ENCODE measurements at regions of chr1 and their contacts with region 1.

Region 1: GRCh38 chr1:48109390-48110013 is 112.3 kb upstream of the TRABD2B start:
- DNase-seq: peak in 2 of 4 experiments; percentile 34 to 61
- ATAC-seq: peak; percentile 84
- H3K4me3 ChIP-seq: no peak overlapping the region
- H3K27ac ChIP-seq: no peak overlapping the region
- H3K4me1 ChIP-seq: no peaks in the 10 kb centered on the region
- H3K27me3 ChIP-seq: no peaks in the 10 kb centered on the region
- CTCF ChIP-seq: peak; percentile 63 to 88 (median 78); a peak in 5 of 6 replicates
- EP300 ChIP-seq: no peak
- POLR2A ChIP-seq: no peak
- RAD21 ChIP-seq: peak; percentile 88 to 93

Region 2: GRCh38 chr1:47738560-47739182 is 370.8 kb before region 1 on chr1:
- CTCF ChIA-PET with region 1: no interaction called
- POLR2A ChIA-PET with region 1: no interaction called
- in situ Hi-C with region 1: no loop called
- intact Hi-C with region 1: loop called (anchors 2 kb)
- DNase-seq: peak; percentile 59 to 80 (median 74)
- ATAC-seq: peak; percentile 97
- H3K4me3 ChIP-seq: no peak overlapping the region
- H3K27ac ChIP-seq: no peak overlapping the region
- H3K4me1 ChIP-seq: no peaks in the 10 kb centered on the region
- H3K27me3 ChIP-seq: no peaks in the 10 kb centered on the region
- CTCF ChIP-seq: peak; percentile 77 to 81 (median 79)
- EP300 ChIP-seq: no peak
- POLR2A ChIP-seq: no peak
- RAD21 ChIP-seq: peak; percentile 34 to 69

Region 3: GRCh38 chr1:48048064-48048463 is 61.4 kb before region 1 on chr1:
- CTCF ChIA-PET with region 1: no interaction called
- POLR2A ChIA-PET with region 1: no interaction called
- in situ Hi-C with region 1: no loop called
- intact Hi-C with region 1: no loop called
- DNase-seq: no peak
- ATAC-seq: no peak
- H3K4me3 ChIP-seq: no peak overlapping the region
- H3K27ac ChIP-seq: no peak overlapping the region
- H3K4me1 ChIP-seq: no peaks in the 10 kb centered on the region
- H3K27me3 ChIP-seq: peaks cover 0 to 5% of the 10 kb centered on the region in 2 experiments; a peak in 1 of 5 replicates
- CTCF ChIP-seq: no peak
- EP300 ChIP-seq: no peak
- POLR2A ChIP-seq: no peak
- RAD21 ChIP-seq: no peak

Region 4: DNA sequence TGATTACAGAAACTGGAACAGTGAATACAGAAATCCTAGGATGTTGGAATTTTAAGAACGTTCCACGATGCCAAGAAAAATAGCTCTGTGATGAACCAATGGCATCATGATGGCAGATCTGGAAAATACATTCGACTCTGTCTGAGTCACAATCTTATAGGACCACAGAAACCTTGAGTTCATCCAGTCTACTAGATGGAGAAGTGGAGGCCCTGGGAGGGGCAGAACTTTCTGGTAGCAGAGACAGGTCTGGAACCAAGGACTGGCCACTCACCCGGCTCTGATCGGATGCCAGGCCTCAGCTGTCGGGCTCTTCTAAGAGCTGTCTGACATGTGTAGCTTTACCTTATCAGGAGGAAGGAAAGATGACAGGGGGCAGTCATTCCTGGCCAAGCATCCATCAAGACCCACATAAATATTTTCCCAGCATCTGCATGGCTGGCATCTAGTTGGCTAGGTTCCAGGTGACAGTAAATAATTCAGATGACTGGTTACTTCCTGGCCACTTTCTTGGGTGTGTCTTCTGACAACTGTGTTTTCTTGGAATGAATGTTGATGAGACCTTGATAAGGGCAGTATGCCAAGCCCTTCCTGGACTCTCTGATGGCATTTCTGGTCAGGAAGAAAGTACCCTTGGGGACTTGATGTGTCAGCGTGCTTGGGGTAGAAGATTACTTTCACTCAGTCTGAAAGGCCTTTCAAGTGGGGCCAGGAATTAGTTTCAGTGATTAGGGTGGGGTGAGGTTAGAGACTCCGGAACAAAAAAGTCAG is 39.7 kb before region 1 on chr1:
- CTCF ChIA-PET with region 1: no interaction called
- POLR2A ChIA-PET with region 1: no interaction called
- in situ Hi-C with region 1: no loop called
- intact Hi-C with region 1: no loop called
- DNase-seq: no peak
- ATAC-seq: no peak
- H3K4me3 ChIP-seq: no peak overlapping the region
- H3K27ac ChIP-seq: no peak overlapping the region
- H3K4me1 ChIP-seq: no peaks in the 10 kb centered on the region
- H3K27me3 ChIP-seq: 0 out of 5 replicates have a peak, but pooled peaks cover 0 to 4% of the 10 kb centered on the region in 2 experiments
- CTCF ChIP-seq: no peak
- EP300 ChIP-seq: no peak
- POLR2A ChIP-seq: no peak
- RAD21 ChIP-seq: no peak

Region 5: GRCh38 chr1:48236716-48237470 is 127.4 kb after region 1 on chr1:
- CTCF ChIA-PET with region 1: interaction called, 4 read pairs
- POLR2A ChIA-PET with region 1: no interaction called
- in situ Hi-C with region 1: no loop called
- intact Hi-C with region 1: loop called (anchors 1 kb)
- DNase-seq: peak; percentile 29 to 53 (median 45)
- ATAC-seq: peak; percentile 75
- H3K4me3 ChIP-seq: no peak overlapping the region
- H3K27ac ChIP-seq: no peak overlapping the region
- H3K4me1 ChIP-seq: no peaks in the 10 kb centered on the region
- H3K27me3 ChIP-seq: no peaks in the 10 kb centered on the region
- CTCF ChIP-seq: peak; percentile 43 to 78 (median 73); a peak in 5 of 6 replicates
- EP300 ChIP-seq: no peak
- POLR2A ChIP-seq: no peak
- RAD21 ChIP-seq: peak; percentile 64 to 78

Region 6: DNA sequence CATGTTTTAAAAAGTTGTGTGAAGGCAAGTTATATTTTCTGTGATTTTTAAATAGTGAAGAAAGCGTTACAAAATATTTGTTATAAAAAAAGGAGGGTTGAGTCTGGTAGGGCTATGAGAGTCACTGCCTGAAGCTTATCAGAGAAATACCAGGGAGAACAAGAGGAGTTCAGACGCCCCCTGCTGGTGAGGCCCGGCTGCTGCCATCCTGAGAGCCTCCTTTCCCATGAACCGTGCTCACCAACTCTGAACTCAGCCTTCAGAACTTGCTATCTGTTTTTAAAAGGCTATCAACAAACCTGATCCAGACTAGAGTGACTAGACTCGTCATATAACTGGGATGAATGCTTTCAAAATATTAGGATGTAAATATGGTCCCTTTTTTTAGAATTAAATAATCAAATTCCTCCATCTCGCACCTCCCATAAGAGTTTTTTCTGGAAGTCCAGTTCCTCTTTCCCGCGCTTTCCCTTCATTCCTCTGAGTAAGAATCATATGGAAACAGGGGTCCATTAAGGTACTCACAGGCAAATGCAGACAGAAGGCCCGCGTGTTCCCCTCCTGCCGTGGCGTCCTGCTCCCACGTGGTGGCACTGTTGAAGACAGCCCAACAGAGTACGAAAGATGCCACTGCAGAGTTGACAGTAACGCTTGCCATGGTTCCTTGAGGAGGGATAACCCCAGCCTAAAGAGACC is 388.7 kb after region 1 on chr1:
- CTCF ChIA-PET with region 1: interaction called, 11 read pairs
- POLR2A ChIA-PET with region 1: no interaction called
- in situ Hi-C with region 1: no loop called
- intact Hi-C with region 1: loop called (anchors 5 kb)
- DNase-seq: peak; percentile 76 to 86 (median 83)
- ATAC-seq: peak; percentile 98
- H3K4me3 ChIP-seq: no peak overlapping the region
- H3K27ac ChIP-seq: no peak overlapping the region
- H3K4me1 ChIP-seq: no peaks in the 10 kb centered on the region
- H3K27me3 ChIP-seq: no peaks in the 10 kb centered on the region
- CTCF ChIP-seq: peak; percentile 81 to 90 (median 85)
- EP300 ChIP-seq: no peak
- POLR2A ChIP-seq: no peak
- RAD21 ChIP-seq: peak; percentile 46 to 56